GM12878 (cell line): ENCODE measurements at regions of chr9 and their contacts with region 1.

Region 1: GRCh38 chr9:26892251-26893029 is at the start of gene CAAP1:
- DNase-seq: peak; percentile 74
- ATAC-seq: peak; percentile 93
- H3K4me3 ChIP-seq: peak within 1 kb of the TSS; percentile 93
- H3K27ac ChIP-seq: peak within 1 kb of the TSS; percentile 97
- H3K4me1 ChIP-seq: no peaks in the 10 kb centered on the region
- H3K27me3 ChIP-seq: no peaks in the 10 kb centered on the region
- CTCF ChIP-seq: peak; percentile 33 to 59 (median 39); a peak in 5 of 6 replicates
- EP300 ChIP-seq: peak in 1 of 2 experiments; percentile 15; a peak in 1 of 4 replicates
- POLR2A ChIP-seq: peak; percentile 97
- RAD21 ChIP-seq: peak; percentile 42
- polyA plus RNA-seq, gene CAAP1: 11.0 to 11.9 TPM

Region 2: DNA sequence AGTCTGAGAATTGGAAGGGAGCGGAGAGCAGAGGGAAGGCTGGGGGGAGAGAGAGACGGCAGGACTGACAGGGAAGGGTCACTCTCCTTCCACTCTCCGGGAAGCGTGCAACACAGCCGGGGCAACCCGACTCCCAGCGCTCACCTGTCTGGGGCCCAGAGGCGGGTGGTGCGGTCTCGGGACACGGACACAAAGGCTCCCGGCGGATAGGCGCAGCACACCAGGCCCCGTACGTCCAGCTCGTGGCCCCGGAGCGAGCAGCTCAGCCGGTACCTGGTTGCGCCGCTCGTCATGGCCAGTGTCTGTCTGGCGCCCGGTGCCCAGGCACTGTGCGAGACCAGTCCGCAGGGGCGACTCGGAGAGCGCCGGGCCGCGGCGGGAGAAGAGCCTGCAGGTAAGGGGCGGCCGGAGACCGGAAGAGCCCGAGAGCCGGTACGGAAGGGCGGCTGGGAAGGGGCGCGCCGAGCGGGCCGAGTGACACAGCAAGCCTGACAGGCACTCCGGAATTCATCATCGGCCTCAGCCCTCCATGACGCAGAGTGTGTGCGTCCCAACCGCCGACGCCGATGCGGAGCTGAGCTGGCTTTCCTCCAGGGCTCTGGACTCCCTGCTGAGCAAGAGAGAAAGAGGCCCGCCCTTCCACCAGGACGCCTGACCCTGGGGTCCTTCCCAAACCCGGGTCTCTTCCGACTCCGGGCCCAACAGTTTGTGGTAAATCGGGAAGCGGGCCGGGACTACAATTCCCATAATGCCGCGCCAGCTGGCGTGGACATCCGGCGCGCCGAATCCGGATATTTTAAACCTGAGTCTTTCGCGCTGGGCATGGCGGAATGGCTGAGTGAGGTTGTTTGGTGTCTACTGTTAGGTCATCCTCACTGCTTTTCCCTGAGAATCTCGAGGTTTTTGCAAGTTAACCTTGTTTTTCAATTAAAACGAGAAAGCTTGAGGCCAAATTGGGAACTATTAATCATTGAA is 54.6 kb after region 1 on chr9 and contains the start of gene PLAA:
- CTCF ChIA-PET with region 1: interaction called, 5 read pairs
- POLR2A ChIA-PET with region 1: interaction called, 12 read pairs
- RAD21 ChIA-PET with region 1: interaction called, 4 read pairs
- SMC1A ChIA-PET with region 1: interaction called, 3 read pairs
- in situ Hi-C with region 1: no loop called
- intact Hi-C with region 1: loop called (anchors 2 kb)
- DNase-seq: peak; percentile 59
- ATAC-seq: peak; percentile 96
- H3K4me3 ChIP-seq: peak within 1 kb of the TSS; percentile 89
- H3K27ac ChIP-seq: peak within 1 kb of the TSS; percentile 98
- H3K4me1 ChIP-seq: no peaks in the 10 kb centered on the region
- H3K27me3 ChIP-seq: no peaks in the 10 kb centered on the region
- CTCF ChIP-seq: peak; percentile 10 to 28 (median 13); a peak in 1 of 6 replicates
- EP300 ChIP-seq: no peak
- POLR2A ChIP-seq: peak; percentile 87
- RAD21 ChIP-seq: no peak
- polyA plus RNA-seq, gene PLAA: 5.6 to 10.4 TPM

Region 3: GRCh38 chr9:26955921-26956859 is 63.8 kb after region 1 on chr9 and contains the start of gene IFT74:
- CTCF ChIA-PET with region 1: interaction called, 10 read pairs
- POLR2A ChIA-PET with region 1: interaction called, 20 read pairs
- RAD21 ChIA-PET with region 1: interaction called, 10 read pairs
- SMC1A ChIA-PET with region 1: interaction called, 7 read pairs
- in situ Hi-C with region 1: no loop called
- intact Hi-C with region 1: no loop called
- DNase-seq: peak; percentile 76
- ATAC-seq: peak; percentile 99
- H3K4me3 ChIP-seq: peak within 1 kb of the TSS; percentile 77
- H3K27ac ChIP-seq: peak within 1 kb of the TSS; percentile 83
- H3K4me1 ChIP-seq: no peaks in the 10 kb centered on the region
- H3K27me3 ChIP-seq: no peaks in the 10 kb centered on the region
- CTCF ChIP-seq: no peak
- EP300 ChIP-seq: no peak
- POLR2A ChIP-seq: peak; percentile 75
- RAD21 ChIP-seq: no peak
- polyA plus RNA-seq, gene IFT74: 7.9 to 9.4 TPM